PC-3 (cell line): ENCODE measurements at regions of chr1 and their contacts with region 1.

Region 1: DNA sequence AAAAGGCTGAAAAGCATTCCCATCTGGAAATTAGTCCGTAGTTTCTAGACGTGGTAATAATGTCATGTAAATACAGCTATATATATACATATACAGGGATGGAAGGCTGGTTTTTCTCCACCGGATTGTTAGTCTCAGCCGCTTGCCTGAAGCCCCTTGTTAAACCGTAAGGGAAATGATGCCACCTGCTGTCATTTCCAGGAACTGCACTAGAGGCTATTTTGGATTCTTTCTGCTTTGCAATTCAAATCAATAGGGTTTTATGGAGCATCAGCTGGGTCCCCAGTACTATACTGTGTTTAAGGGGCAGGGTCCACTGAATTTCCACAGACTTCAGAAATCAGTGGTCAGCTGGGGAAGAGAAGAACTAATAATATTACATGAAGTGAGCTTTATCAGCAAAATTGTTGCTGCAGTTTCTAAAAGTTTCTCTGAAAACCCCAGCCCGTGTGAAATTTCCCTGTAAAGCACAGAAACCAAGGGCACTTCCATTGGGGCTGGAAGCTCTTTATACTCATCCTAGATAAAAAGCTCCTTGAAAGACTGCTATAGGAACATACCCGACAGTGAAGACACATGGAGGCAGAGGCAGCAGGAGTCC is 33.8 kb upstream of the MPZL1 start:
- DNase-seq: peak; percentile 97
- ATAC-seq: peak; percentile 56
- H3K4me3 ChIP-seq: no peak overlapping the region
- H3K27ac ChIP-seq: no peak overlapping the region
- H3K4me1 ChIP-seq: peaks cover 13% of the 10 kb centered on the region; the same call in 1 of the 2 replicates
- H3K27me3 ChIP-seq: 0 out of 2 replicates have a peak, but pooled peaks cover 8% of the 10 kb centered on the region
- CTCF ChIP-seq: peak; percentile 96

Region 2: DNA sequence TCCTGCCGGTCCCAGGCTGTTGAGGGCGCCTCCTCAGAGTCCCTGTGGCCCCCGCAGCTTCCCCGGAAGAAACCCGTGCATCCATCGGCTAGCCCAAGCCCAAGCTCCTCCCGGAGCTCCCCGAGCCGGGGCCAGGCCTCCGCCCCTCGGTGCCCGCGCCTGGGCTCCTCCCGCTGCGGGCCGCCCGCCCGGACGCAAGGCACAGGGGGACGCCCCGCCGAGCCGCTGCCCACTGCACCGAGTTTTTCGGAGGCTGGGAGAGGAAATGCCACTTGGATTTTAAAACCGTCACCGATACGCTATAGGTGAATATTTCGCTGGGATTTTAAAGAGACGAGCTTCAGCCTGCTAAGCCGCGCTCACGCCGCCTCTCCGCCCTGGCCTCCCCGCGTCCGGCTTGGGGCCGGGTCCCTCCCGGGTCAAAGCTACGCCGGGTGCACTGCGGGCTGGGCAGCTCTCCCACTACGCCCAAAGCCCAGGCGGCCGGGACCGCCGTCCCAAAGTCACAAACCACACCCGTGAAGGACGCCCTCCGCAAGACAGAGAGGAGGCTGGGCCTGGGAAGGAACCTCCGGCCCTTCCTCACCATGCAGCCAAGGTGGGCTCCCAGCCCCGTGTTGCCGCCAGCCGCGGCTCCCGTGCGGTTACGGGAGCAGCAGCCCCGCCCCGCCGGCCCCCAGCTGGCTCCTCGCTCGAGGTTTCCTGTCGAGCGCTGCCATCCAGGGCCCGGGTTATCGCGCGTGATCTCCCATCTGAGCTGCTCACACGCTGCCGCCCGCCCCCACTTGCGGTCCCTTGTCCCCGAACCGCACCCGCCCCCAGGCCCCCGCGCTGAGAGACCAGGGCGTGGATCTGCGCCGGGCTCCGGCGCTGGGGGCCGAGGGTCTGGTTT is 232.9 kb before region 1 on chr1:
- CTCF ChIA-PET with region 1: no interaction called
- POLR2A ChIA-PET with region 1: no interaction called
- intact Hi-C with region 1: no loop called
- DNase-seq: peak; percentile 61
- ATAC-seq: peak; percentile 73
- H3K4me3 ChIP-seq: peak overlapping the region; percentile 89
- H3K27ac ChIP-seq: no peak overlapping the region
- H3K4me1 ChIP-seq: peaks cover 6% of the 10 kb centered on the region; the same call in 1 of the 2 replicates
- H3K27me3 ChIP-seq: no peaks in the 10 kb centered on the region; the same call in 1 of the 2 replicates
- CTCF ChIP-seq: no peak

Region 3: GRCh38 chr1:167553136-167554027 is 134.6 kb before region 1 on chr1 and contains the start of gene CREG1:
- CTCF ChIA-PET with region 1: no interaction called
- POLR2A ChIA-PET with region 1: no interaction called
- intact Hi-C with region 1: loop called (anchors 1 kb)
- DNase-seq: peak; percentile 97
- ATAC-seq: peak; percentile 99
- H3K4me3 ChIP-seq: peak within 1 kb of the TSS; percentile 74
- H3K27ac ChIP-seq: no peak within 1 kb of the TSS
- H3K4me1 ChIP-seq: peaks cover 14% of the 10 kb centered on the region; the same call in 1 of the 2 replicates
- H3K27me3 ChIP-seq: no peaks in the 10 kb centered on the region
- CTCF ChIP-seq: no peak
- total RNA-seq, gene CREG1: 55.7 and 63.9 TPM in 2 replicates

Region 4: GRCh38 chr1:167599957-167600581 is 88.0 kb before region 1 on chr1:
- CTCF ChIA-PET with region 1: interaction called, 31 read pairs
- POLR2A ChIA-PET with region 1: no interaction called
- intact Hi-C with region 1: loop called (anchors 1 kb)
- DNase-seq: peak; percentile 58
- ATAC-seq: peak; percentile 88
- H3K4me3 ChIP-seq: no peak overlapping the region
- H3K27ac ChIP-seq: no peak overlapping the region
- H3K4me1 ChIP-seq: no peaks in the 10 kb centered on the region
- H3K27me3 ChIP-seq: peaks cover 12% of the 10 kb centered on the region
- CTCF ChIP-seq: peak; percentile 82

Region 5: DNA sequence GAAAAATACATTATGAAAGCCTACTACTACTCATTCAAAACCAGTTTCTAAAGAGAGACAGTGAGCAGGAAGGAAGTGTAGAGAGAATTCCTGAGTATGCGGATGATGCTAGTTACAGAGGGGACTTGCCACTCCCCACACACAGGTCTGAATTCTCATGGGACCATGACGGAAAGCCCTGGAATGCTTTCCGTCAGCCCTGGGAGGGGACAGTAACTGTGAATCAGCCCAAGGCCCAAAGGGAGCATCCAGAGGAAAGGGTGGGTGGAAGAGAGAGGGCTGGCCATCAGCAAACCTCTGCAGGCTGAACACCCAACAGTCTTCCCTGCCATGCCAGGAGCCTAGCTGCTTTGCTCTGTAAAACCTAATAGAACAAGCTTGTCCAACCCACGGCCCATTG is 21.6 kb before region 1 on chr1:
- CTCF ChIA-PET with region 1: interaction called, 3 read pairs
- POLR2A ChIA-PET with region 1: no interaction called
- intact Hi-C with region 1: loop called (anchors 2 kb)
- DNase-seq: peak; percentile 48
- ATAC-seq: no peak
- H3K4me3 ChIP-seq: no peak overlapping the region
- H3K27ac ChIP-seq: no peak overlapping the region
- H3K4me1 ChIP-seq: peaks cover 21% of the 10 kb centered on the region
- H3K27me3 ChIP-seq: no peaks in the 10 kb centered on the region
- CTCF ChIP-seq: no peak

Region 6: GRCh38 chr1:167737169-167737568 is 49.1 kb after region 1 on chr1:
- CTCF ChIA-PET with region 1: no interaction called
- POLR2A ChIA-PET with region 1: no interaction called
- intact Hi-C with region 1: no loop called
- DNase-seq: no peak
- ATAC-seq: no peak
- H3K4me3 ChIP-seq: no peak overlapping the region
- H3K27ac ChIP-seq: no peak overlapping the region
- H3K4me1 ChIP-seq: peaks cover 7% of the 10 kb centered on the region
- H3K27me3 ChIP-seq: no peaks in the 10 kb centered on the region
- CTCF ChIP-seq: no peak

Region 7: DNA sequence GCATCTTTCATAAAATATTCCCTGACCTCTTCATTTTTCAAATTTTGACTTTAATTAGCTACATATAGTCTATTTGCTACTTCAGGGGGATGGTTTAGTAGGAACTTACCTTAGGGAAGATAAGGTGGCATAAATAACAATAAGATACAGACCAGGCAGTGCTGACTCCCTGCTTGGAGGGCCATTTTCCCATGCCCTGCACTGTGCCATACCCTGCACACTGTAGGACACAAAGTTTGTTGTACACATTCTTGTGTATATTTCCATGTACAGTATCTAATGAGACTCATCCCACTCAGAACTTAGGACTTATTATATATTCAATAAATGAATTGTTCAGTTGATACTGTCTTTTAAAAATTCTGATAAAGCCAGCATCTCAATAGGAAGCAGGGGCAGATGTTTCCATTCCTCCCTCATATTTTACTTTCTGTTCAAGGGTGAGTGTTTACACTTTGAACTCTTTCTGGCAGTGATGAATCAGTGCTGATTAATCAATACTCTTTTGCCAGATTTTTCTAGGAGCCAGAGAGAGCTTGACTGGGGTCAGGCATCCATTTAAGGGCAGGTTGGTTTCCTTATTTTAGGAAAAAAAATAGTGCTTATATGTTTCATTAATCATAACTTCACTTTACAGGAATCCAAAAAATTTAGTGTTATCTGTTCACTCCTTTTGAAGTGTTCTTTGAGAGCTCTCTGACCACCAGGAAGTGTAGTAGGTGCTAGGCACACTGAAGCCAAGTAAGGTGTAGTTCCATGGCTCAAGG is 64.4 kb after region 1 on chr1:
- CTCF ChIA-PET with region 1: no interaction called
- POLR2A ChIA-PET with region 1: no interaction called
- intact Hi-C with region 1: no loop called
- DNase-seq: peak; percentile 41
- ATAC-seq: peak; percentile 42; the same call in 1 of the 2 replicates
- H3K4me3 ChIP-seq: no peak overlapping the region
- H3K27ac ChIP-seq: no peak overlapping the region
- H3K4me1 ChIP-seq: peaks cover 16% of the 10 kb centered on the region
- H3K27me3 ChIP-seq: no peaks in the 10 kb centered on the region
- CTCF ChIP-seq: no peak